Breast epithelium (tissue), 4 donors: ENCODE measurements at regions of chr9 and their contacts with region 1.

Region 1: GRCh38 chr9:87581513-87581912 is 83.8 kb downstream of the DAPK1 start:
- DNase-seq: no peak
- H3K4me3 ChIP-seq: no peak overlapping the region
- H3K27ac ChIP-seq: peak overlapping the region in 1 of 2 donors; percentile 38
- H3K4me1 ChIP-seq: no peaks in the 10 kb centered on the region
- H3K27me3 ChIP-seq: no peaks in the 10 kb centered on the region
- CTCF ChIP-seq: no peak
- POLR2A ChIP-seq: no peak

Region 2: GRCh38 chr9:86876797-86877196 is 704.7 kb before region 1 on chr9:
- intact Hi-C with region 1: no loop called
- DNase-seq: no peak
- H3K4me3 ChIP-seq: no peak overlapping the region
- H3K27ac ChIP-seq: no peak overlapping the region
- H3K4me1 ChIP-seq: no peaks in the 10 kb centered on the region
- H3K27me3 ChIP-seq: no peaks in the 10 kb centered on the region
- CTCF ChIP-seq: no peak
- POLR2A ChIP-seq: no peak

Region 3: GRCh38 chr9:87505869-87506678 is 75.4 kb before region 1 on chr9:
- intact Hi-C with region 1: loop called (anchors 2 kb)
- DNase-seq: no peak
- H3K4me3 ChIP-seq: no peak overlapping the region
- H3K27ac ChIP-seq: no peak overlapping the region
- H3K4me1 ChIP-seq: no peaks in the 10 kb centered on the region
- H3K27me3 ChIP-seq: no peaks in the 10 kb centered on the region
- CTCF ChIP-seq: no peak
- POLR2A ChIP-seq: no peak